ENCODE measurements at regions of chr2 and their contacts with region 1.

Region 1: GRCh38 chr2:46569061-46569560 is 89.7 kb downstream of the TMEM247 start:
- DNase-seq: peak in 1 of 2 donors; percentile 27
- ATAC-seq: peak; percentile 87 to 91 (median 90)
- H3K4me3 ChIP-seq: no peak overlapping the region
- H3K4me3 Mint-ChIP-seq: peak overlapping the region; percentile 91
- H3K27ac ChIP-seq: peak overlapping the region; percentile 90
- H3K27ac Mint-ChIP-seq: peak overlapping the region; percentile 95 to 99
- H3K4me1 ChIP-seq: peaks cover 45% of the 10 kb centered on the region
- H3K4me1 Mint-ChIP-seq: peaks cover 72% of the 10 kb centered on the region in 2 donors
- H3K27me3 ChIP-seq: no peaks in the 10 kb centered on the region
- H3K27me3 Mint-ChIP-seq: no peaks in the 10 kb centered on the region
- CTCF ChIP-seq: no peak

Region 2: GRCh38 chr2:46535360-46535759 is 33.8 kb before region 1 on chr2:
- intact Hi-C with region 1: loop called (anchors 2 kb)
- DNase-seq: peak; percentile 56 to 70
- ATAC-seq: peak; percentile 83 to 93 (median 88)
- H3K4me3 ChIP-seq: no peak overlapping the region
- H3K4me3 Mint-ChIP-seq: peak overlapping the region; percentile 85
- H3K27ac ChIP-seq: peak overlapping the region; percentile 65
- H3K27ac Mint-ChIP-seq: peak overlapping the region; percentile 87 to 94
- H3K4me1 ChIP-seq: peaks cover 50% of the 10 kb centered on the region
- H3K4me1 Mint-ChIP-seq: peaks cover 65% of the 10 kb centered on the region in 2 donors
- H3K27me3 ChIP-seq: no peaks in the 10 kb centered on the region
- H3K27me3 Mint-ChIP-seq: no peaks in the 10 kb centered on the region
- CTCF ChIP-seq: no peak

Region 3: DNA sequence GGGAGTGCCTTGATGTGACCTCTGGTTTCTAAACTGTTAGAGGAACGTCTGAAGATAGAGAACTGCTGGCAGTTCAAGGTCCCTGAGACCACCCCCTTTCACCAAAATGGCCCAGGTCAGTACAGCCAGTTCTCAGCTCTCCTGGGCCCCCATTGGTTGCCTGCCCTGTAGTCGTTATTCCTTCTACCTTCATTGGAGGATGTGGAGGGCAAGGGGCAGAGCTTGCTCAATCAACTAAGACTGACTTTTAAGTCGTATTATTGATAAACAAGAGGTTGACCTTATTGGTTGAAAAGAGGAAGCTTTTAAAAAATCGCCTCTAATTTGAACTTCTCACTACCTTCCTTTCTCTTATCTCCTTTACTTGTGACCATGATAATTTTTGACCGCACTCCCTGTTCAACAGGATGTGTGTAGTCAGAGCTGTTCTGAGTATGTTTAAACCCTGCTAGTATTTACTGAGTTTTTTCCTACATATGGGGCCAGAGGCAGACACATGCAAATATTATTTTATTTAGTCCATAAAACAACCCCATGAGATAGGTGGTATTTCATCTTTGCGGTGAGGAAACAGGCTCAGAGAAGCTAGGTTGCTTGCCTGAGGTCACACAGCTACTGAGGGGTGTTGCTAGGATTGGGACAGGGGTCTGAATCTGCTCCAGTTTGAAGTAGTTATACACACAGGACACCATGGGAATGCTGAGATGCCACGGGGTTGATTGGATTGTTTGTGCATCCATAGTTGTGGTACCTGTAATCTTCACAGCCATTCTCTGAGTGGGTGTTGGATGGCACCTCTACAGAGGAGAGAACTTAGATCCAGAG is 23.9 kb before region 1 on chr2:
- intact Hi-C with region 1: loop called (anchors 1 kb)
- DNase-seq: peak in 1 of 2 donors; percentile 44
- ATAC-seq: peak in 2 of 3 donors; percentile 12 to 28
- H3K4me3 ChIP-seq: peak overlapping the region; percentile 1
- H3K4me3 Mint-ChIP-seq: peak overlapping the region; percentile 95
- H3K27ac ChIP-seq: peak overlapping the region; percentile 98
- H3K27ac Mint-ChIP-seq: peak overlapping the region; percentile 97
- H3K4me1 ChIP-seq: peaks cover 81% of the 10 kb centered on the region
- H3K4me1 Mint-ChIP-seq: peaks cover 76 to 82% of the 10 kb centered on the region in 2 donors
- H3K27me3 ChIP-seq: no peaks in the 10 kb centered on the region
- H3K27me3 Mint-ChIP-seq: no peaks in the 10 kb centered on the region
- CTCF ChIP-seq: no peak

Region 4: GRCh38 chr2:46967990-46968647 is 399.0 kb after region 1 on chr2:
- intact Hi-C with region 1: no loop called
- DNase-seq: no peak
- ATAC-seq: no peak
- H3K4me3 ChIP-seq: no peak overlapping the region
- H3K4me3 Mint-ChIP-seq: no peak overlapping the region
- H3K27ac ChIP-seq: no peak overlapping the region
- H3K27ac Mint-ChIP-seq: no peak overlapping the region
- H3K4me1 ChIP-seq: peaks cover 27% of the 10 kb centered on the region
- H3K4me1 Mint-ChIP-seq: peaks cover 7 to 23% of the 10 kb centered on the region in 2 donors
- H3K27me3 ChIP-seq: no peaks in the 10 kb centered on the region
- H3K27me3 Mint-ChIP-seq: no peaks in the 10 kb centered on the region
- CTCF ChIP-seq: no peak

Measured in natural killer cell (primary cell).